ENCODE measurements at regions of chr2 and their contacts with region 1.

Region 1: GRCh38 chr2:235779444-235779896 is 285.6 kb downstream of the AGAP1 start:
- DNase-seq: peak; percentile 76
- H3K4me3 Mint-ChIP-seq: no peak overlapping the region
- H3K27ac Mint-ChIP-seq: no peak overlapping the region
- H3K4me1 Mint-ChIP-seq: no peaks in the 10 kb centered on the region
- H3K27me3 Mint-ChIP-seq: peaks cover 21% of the 10 kb centered on the region

Region 2: GRCh38 chr2:235766278-235766677 is 13.2 kb before region 1 on chr2:
- CTCF ChIA-PET with region 1: interaction called, 14 read pairs
- POLR2A ChIA-PET with region 1: no interaction called
- intact Hi-C with region 1: no loop called
- DNase-seq: peak; percentile 58
- H3K4me3 Mint-ChIP-seq: no peak overlapping the region
- H3K27ac Mint-ChIP-seq: no peak overlapping the region
- H3K4me1 Mint-ChIP-seq: peaks cover 2% of the 10 kb centered on the region
- H3K27me3 Mint-ChIP-seq: peaks cover 5% of the 10 kb centered on the region

Region 3: GRCh38 chr2:236049981-236050380 is 270.5 kb after region 1 on chr2:
- CTCF ChIA-PET with region 1: no interaction called
- POLR2A ChIA-PET with region 1: no interaction called
- intact Hi-C with region 1: loop called (anchors 10 kb)
- DNase-seq: peak; percentile 16
- H3K4me3 Mint-ChIP-seq: no peak overlapping the region
- H3K27ac Mint-ChIP-seq: no peak overlapping the region
- H3K4me1 Mint-ChIP-seq: peaks cover 7% of the 10 kb centered on the region
- H3K27me3 Mint-ChIP-seq: peaks cover 23% of the 10 kb centered on the region